Activated CD4-positive, alpha-beta T cell treated with anti-CD3 and anti-CD28 coated beads for 36 hours (primary cell): ENCODE measurements at regions of chr6 and their contacts with region 1.

Region 1: DNA sequence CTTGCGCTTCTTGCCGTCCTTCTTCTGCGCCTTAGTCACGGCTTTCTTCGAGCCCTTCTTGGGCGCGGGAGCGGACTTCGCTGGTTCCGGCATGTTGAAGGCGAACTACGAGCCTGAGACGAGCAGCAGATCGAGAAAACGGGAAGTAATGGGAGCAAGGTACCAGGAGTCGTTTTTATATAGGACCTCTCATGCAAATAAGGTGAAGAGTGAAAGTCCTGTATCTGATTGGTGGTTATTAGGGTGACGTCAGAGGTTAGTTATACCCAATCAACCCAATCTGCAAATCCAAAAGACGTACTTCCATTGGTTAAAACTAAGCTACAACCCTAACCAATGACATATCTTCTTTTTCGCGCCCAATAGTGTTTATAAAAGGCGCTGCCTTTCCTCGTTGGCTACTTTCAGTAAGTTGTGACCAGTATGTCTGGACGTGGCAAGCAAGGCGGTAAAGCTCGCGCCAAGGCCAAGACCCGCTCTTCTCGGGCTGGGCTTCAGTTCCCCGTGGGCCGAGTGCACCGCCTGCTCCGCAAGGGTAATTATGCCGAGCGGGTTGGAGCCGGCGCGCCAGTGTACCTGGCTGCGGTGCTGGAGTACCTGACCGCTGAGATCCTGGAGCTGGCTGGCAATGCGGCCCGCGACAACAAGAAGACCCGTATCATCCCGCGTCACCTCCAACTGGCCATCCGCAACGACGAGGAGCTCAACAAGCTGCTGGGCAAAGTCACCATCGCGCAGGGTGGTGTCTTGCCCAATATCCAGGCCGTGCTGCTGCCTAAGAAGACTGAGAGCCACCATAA is 100.6 kb upstream of the PRSS16 start:
- DNase-seq: peak; percentile 89
- ATAC-seq: peak; percentile 69
- H3K4me3 Mint-ChIP-seq: no peak overlapping the region
- H3K27ac Mint-ChIP-seq: no peak overlapping the region
- H3K4me1 Mint-ChIP-seq: peaks cover 11% of the 10 kb centered on the region
- H3K27me3 Mint-ChIP-seq: no peaks in the 10 kb centered on the region

Region 2: GRCh38 chr6:26175428-26176181 is 971.3 kb before region 1 on chr6:
- CTCF ChIA-PET with region 1: no interaction called
- POLR2A ChIA-PET with region 1: no interaction called
- intact Hi-C with region 1: loop called in 1 of 2 experiments (anchors 5 kb)
- DNase-seq: peak; percentile 69
- ATAC-seq: peak; percentile 14
- H3K4me3 Mint-ChIP-seq: peak overlapping the region; percentile 30
- H3K27ac Mint-ChIP-seq: peak overlapping the region; percentile 80
- H3K4me1 Mint-ChIP-seq: peaks cover 33% of the 10 kb centered on the region
- H3K27me3 Mint-ChIP-seq: no peaks in the 10 kb centered on the region

Region 3: GRCh38 chr6:26249957-26250697 is 896.8 kb before region 1 on chr6:
- CTCF ChIA-PET with region 1: no interaction called
- POLR2A ChIA-PET with region 1: interaction called, 18 read pairs
- intact Hi-C with region 1: no loop called
- DNase-seq: peak; percentile 85
- ATAC-seq: peak; percentile 63
- H3K4me3 Mint-ChIP-seq: peak overlapping the region; percentile 86
- H3K27ac Mint-ChIP-seq: peak overlapping the region; percentile 97
- H3K4me1 Mint-ChIP-seq: peaks cover 14% of the 10 kb centered on the region
- H3K27me3 Mint-ChIP-seq: no peaks in the 10 kb centered on the region

Region 4: GRCh38 chr6:27126815-27127537 is 19.9 kb before region 1 on chr6:
- CTCF ChIA-PET with region 1: interaction called, 15 read pairs
- POLR2A ChIA-PET with region 1: interaction called, 368 read pairs
- intact Hi-C with region 1: loop called in 1 of 2 experiments (anchors 1 kb)
- DNase-seq: peak; percentile 89
- ATAC-seq: peak; percentile 74
- H3K4me3 Mint-ChIP-seq: peak overlapping the region; percentile 68
- H3K27ac Mint-ChIP-seq: peak overlapping the region; percentile 67
- H3K4me1 Mint-ChIP-seq: peaks cover 20% of the 10 kb centered on the region
- H3K27me3 Mint-ChIP-seq: no peaks in the 10 kb centered on the region

Region 5: DNA sequence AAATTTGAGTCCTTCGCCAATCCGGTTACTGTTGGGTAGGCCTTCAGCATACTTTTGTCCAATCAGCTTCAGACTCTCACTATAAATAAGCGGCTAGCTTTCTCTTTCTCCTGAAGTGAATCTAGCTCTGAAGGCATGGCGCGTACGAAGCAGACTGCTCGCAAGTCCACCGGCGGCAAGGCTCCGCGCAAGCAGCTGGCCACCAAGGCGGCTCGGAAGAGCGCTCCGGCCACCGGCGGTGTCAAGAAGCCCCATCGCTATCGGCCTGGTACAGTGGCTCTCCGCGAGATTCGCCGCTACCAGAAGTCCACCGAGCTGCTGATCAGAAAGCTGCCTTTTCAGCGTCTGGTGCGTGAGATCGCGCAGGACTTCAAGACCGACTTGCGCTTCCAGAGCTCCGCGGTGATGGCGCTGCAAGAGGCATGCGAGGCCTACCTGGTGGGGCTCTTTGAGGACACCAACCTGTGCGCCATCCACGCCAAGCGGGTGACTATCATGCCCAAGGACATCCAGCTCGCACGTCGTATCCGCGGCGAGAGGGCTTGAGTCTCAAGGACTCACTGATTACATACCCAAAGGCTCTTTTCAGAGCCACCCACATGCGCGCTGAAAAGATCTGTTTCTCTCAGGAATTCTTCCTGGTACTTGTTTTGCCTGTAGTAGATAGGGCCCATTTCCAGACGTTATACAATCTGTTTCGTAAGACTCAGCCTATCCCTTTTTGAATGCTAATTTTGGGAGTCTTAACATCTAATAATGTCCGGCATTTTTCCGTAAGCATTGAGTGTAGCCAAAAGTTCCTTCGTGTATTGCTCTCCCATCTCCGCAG is 663.2 kb after region 1 on chr6:
- CTCF ChIA-PET with region 1: interaction called, 3 read pairs
- POLR2A ChIA-PET with region 1: interaction called, 52 read pairs
- intact Hi-C with region 1: loop called (anchors 1 to 2 kb)
- DNase-seq: peak; percentile 83
- ATAC-seq: peak; percentile 33
- H3K4me3 Mint-ChIP-seq: peak overlapping the region; percentile 86
- H3K27ac Mint-ChIP-seq: peak overlapping the region; percentile 95
- H3K4me1 Mint-ChIP-seq: peaks cover 49% of the 10 kb centered on the region
- H3K27me3 Mint-ChIP-seq: no peaks in the 10 kb centered on the region

Region 6: DNA sequence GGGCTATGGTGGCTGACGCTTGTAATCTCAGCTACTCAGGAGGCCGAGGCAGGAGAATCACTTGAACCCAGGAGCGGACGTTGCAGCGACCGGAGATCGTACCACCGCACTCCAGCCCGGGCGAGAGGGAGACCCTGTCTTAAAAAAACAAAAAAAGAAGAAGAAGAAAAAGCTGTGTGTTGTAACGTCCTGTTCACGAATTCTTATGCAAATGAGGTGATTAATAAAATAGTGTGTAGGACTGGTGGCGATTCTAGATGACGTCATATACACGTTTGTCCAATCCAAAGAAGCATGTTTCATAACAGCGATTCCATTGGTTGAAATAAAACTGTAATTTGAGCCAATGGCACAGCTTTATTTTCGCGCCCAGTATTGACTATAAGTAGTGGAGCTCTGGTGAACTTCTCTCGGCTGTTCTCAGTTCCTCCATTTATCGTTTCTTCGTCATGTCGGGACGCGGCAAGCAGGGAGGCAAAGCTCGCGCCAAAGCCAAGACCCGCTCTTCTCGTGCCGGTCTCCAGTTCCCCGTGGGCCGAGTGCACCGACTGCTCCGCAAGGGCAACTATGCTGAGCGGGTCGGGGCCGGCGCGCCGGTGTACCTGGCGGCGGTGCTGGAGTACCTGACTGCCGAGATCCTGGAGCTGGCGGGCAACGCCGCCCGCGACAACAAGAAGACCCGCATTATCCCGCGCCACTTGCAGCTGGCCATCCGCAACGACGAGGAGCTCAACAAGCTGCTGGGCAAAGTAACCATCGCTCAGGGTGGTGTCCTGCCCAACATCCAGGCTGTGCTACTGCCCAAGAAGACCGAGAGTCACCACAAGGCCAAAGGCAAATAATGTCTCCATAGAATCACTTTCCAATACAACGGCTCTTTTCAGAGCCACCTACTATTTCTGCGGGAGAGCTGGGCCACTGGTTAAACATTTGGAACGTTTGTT is 718.3 kb after region 1 on chr6:
- CTCF ChIA-PET with region 1: no interaction called
- POLR2A ChIA-PET with region 1: interaction called, 48 read pairs
- intact Hi-C with region 1: loop called in 1 of 2 experiments (anchors 2 kb)
- DNase-seq: peak; percentile 86
- ATAC-seq: peak; percentile 57
- H3K4me3 Mint-ChIP-seq: peak overlapping the region; percentile 94
- H3K27ac Mint-ChIP-seq: peak overlapping the region; percentile 99
- H3K4me1 Mint-ChIP-seq: peaks cover 40% of the 10 kb centered on the region
- H3K27me3 Mint-ChIP-seq: no peaks in the 10 kb centered on the region

Region 7: DNA sequence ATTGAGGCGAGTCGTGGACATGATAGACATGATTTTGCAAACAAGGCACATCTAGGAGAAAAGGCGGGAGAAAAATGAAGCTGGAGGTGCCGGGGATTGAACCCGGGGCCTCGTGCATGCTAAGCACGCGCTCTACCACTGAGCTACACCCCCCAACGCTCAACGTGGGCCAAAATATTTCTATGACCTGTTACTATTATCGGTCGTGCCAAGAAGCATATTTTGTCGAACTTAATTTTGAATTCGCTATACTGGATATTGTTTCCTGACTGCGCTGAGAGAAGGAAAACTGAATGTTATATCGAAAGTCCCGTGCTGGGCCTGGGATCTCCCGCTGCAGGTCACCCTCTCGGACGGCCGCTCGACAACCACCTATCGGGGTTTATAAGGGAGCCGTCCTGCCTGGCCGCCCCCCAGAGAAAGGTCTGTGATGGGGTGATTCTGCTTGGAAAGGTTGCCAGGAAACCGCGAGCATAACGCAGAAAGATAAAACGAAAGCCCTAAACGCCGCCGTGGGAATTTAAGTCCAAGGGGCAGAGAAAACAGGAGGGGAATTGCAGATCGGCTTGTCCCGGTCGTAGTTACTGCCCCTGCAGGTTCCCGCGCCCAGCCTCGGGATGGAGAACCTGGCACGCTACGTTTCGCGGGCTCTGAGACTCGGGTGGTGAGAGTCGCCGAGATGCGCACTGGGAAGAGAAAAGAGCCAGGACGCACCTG is 1716.9 kb after region 1 on chr6:
- CTCF ChIA-PET with region 1: no interaction called
- POLR2A ChIA-PET with region 1: no interaction called
- intact Hi-C with region 1: loop called in 1 of 2 experiments (anchors 10 kb)
- DNase-seq: peak; percentile 88
- ATAC-seq: peak; percentile 45
- H3K4me3 Mint-ChIP-seq: peak overlapping the region; percentile 74
- H3K27ac Mint-ChIP-seq: peak overlapping the region; percentile 78
- H3K4me1 Mint-ChIP-seq: peaks cover 36% of the 10 kb centered on the region
- H3K27me3 Mint-ChIP-seq: peaks cover 1% of the 10 kb centered on the region